Esophagus muscularis mucosa (tissue), 4 donors: ENCODE measurements at regions of chr5 and their contacts with region 1.

Region 1: GRCh38 chr5:128965011-128965637 is at the start of gene SLC27A6:
- DNase-seq: no peak
- H3K4me3 ChIP-seq: peak within 1 kb of the TSS; percentile 52 to 72 (median 63)
- H3K27ac ChIP-seq: peak within 1 kb of the TSS; percentile 70 to 83 (median 78)
- H3K4me1 ChIP-seq: peaks cover 0 to 19% (median 10%) of the 10 kb centered on the region in 4 donors
- H3K27me3 ChIP-seq: peaks cover 0 to 5% (median 0%) of the 10 kb centered on the region in 4 donors
- CTCF ChIP-seq: peak in 1 of 3 experiments; percentile 16
- EP300 ChIP-seq: no peak
- POLR2A ChIP-seq: no peak
- total RNA-seq, gene SLC27A6: 22.5 to 77.1 (median 48.9) TPM

Region 2: DNA sequence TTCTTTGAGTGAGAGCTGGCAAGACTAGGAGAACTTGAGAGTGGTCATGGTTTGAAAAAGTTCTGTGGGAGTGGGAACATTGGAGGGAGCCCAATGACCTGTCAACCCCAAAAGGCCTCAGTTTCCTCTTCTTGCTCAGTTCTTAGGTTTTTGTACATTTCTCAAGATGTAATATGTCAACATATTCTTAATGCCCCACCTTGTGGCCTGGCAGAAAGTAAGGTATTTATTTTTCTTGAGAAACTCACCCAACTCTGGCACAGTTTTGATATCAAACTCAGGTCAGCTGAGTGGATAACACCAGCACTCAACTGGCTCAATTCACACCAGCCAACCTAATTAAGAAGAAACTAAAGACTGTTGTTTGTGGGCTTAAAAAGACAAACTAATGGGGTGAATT is 122.9 kb before region 1 on chr5:
- intact Hi-C with region 1: no loop called
- DNase-seq: no peak
- H3K4me3 ChIP-seq: no peak overlapping the region
- H3K27ac ChIP-seq: no peak overlapping the region
- H3K4me1 ChIP-seq: no peaks in the 10 kb centered on the region
- H3K27me3 ChIP-seq: no peaks in the 10 kb centered on the region
- CTCF ChIP-seq: no peak
- EP300 ChIP-seq: no peak
- POLR2A ChIP-seq: no peak

Region 3: GRCh38 chr5:129094087-129094923 is 129.2 kb after region 1 on chr5 and contains the start of gene ISOC1:
- intact Hi-C with region 1: loop called (anchors 10 kb)
- DNase-seq: peak; percentile 94
- H3K4me3 ChIP-seq: peak within 1 kb of the TSS; percentile 77 to 83 (median 81)
- H3K27ac ChIP-seq: peak within 1 kb of the TSS; percentile 86 to 94 (median 90)
- H3K4me1 ChIP-seq: peaks cover 22 to 40% (median 36%) of the 10 kb centered on the region in 4 donors
- H3K27me3 ChIP-seq: no peaks in the 10 kb centered on the region
- CTCF ChIP-seq: no peak
- EP300 ChIP-seq: no peak
- POLR2A ChIP-seq: no peak
- total RNA-seq, gene ISOC1: 53.5 to 136 (median 89.5) TPM